Activated CD4-positive, alpha-beta memory T cell treated with anti-CD3 and anti-CD28 coated beads, Interleukin-2, amount 10 ng/mL, durations not matched to agents 7 days and 5 days (primary cell): ENCODE measurements at regions of chr5 and their contacts with region 1.

Region 1: DNA sequence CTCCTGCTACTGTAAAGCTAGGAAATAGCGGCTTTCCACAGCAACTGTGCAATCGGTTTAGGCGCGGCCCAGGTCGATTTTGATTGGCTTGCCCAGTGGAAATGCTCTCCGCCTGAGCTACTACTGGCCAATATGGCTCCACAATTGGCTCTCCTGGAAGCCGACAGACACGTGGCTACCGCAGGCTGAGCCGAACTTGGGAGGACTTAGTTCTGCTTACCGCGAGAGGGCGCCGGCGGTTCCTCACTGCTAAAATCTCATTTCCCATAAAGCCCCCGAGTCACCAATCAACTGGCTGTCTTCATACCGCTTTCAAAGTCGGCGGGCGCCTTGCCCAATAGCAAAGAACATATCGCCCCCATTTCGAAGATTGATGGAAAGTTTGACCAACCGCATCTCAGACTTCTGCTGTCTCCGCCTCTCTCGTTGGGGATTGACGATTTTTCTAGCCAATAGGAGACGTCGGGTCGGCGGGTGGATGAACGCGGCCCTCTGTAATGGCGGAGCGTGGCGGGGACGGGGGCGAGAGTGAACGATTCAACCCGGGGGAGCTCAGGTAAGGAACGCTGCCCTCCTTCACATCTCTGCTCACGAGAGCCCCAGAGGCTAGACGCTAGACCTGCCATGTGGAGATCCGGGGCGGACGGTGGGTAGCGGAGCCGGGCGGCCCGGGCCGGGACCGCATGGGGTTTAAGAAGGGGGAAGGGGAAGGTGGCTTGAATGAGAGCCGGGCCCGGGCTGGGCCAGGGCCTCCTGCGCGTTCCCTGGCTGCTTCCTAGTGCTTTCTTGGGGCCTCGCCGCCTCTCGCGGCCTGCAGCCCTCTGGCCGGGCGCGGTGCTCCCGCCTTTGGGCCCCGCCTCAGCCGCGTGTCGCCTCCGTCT is at the start of gene TCERG1:
- DNase-seq: peak; percentile 99
- H3K4me3 Mint-ChIP-seq: peak within 1 kb of the TSS; percentile 94
- H3K27ac Mint-ChIP-seq: peak within 1 kb of the TSS; percentile 95
- H3K4me1 Mint-ChIP-seq: peaks cover 38% of the 10 kb centered on the region
- H3K27me3 Mint-ChIP-seq: peaks cover 7% of the 10 kb centered on the region
- total RNA-seq, gene TCERG1: 77.0 to 79.2 TPM

Region 2: GRCh38 chr5:146426853-146427618 is 20.1 kb before region 1 on chr5:
- CTCF ChIA-PET with region 1: interaction called, 15 read pairs
- POLR2A ChIA-PET with region 1: no interaction called
- DNase-seq: no peak
- H3K4me3 Mint-ChIP-seq: no peak overlapping the region
- H3K27ac Mint-ChIP-seq: no peak overlapping the region
- H3K4me1 Mint-ChIP-seq: peaks cover 5% of the 10 kb centered on the region
- H3K27me3 Mint-ChIP-seq: peaks cover 24% of the 10 kb centered on the region

Region 3: DNA sequence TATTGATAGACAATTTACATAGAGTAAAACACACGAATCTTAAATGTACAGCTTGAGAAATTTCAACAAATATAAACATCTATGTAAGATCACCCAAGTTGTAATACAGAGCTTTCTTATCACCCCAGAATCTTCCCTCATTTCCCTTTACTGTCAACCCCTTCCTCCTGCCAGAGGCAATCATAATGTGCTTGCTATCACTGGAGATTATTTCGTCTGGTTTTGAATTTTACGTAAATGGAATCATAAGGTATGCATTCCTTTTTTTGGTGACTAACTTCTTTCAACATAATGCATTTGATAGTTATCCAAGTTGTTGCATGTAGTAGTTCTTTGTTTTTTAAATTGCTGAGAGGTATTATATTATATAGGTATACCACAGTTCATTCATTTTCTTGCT is 106.3 kb after region 1 on chr5:
- CTCF ChIA-PET with region 1: no interaction called
- POLR2A ChIA-PET with region 1: no interaction called
- DNase-seq: no peak
- H3K4me3 Mint-ChIP-seq: no peak overlapping the region
- H3K27ac Mint-ChIP-seq: no peak overlapping the region
- H3K4me1 Mint-ChIP-seq: no peaks in the 10 kb centered on the region
- H3K27me3 Mint-ChIP-seq: peaks cover 6% of the 10 kb centered on the region